Caco-2 (cell line): ENCODE measurements at regions of chr5 and their contacts with region 1.

Region 1: DNA sequence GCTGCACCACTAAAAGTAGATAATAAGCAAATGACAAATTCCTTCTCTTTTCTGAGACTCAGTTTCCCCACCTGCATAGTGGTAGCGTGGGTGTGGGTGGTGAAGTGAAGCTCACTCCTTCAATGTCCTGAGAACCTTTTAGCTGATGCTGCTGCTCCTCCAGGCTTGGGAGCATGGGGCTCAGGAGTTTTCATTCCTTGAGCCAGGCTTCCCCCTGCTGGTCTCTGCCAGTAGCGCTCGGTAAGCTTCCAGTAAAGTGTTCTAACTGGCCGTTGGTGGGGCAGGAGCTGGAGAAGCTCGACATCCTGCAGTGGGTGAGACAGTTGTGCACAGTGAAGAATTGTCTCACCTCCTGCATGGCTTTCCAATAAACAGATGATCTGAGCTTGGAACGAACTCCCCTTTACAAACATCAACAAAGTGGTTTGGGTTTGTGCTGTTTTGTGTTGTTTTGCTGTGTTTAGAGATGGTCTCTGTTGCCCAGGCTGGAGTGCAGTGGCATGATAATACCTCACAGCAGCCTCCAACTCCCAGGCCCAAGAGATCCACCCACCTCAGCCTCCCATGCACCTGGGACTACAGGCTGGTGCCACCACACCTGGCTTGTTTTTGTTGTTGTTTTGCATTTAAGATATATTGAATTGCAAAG is 34.6 kb downstream of the SPARC start:
- DNase-seq: peak; percentile 79 to 86
- H3K4me3 ChIP-seq: no peak overlapping the region
- H3K4me3 Mint-ChIP-seq: no peak overlapping the region
- H3K27ac Mint-ChIP-seq: no peak overlapping the region
- H3K4me1 ChIP-seq: no peaks in the 10 kb centered on the region
- H3K4me1 Mint-ChIP-seq: peaks cover 7% of the 10 kb centered on the region
- H3K27me3 ChIP-seq: no peaks in the 10 kb centered on the region
- H3K27me3 Mint-ChIP-seq: no peaks in the 10 kb centered on the region
- CTCF ChIP-seq: peak; percentile 88 to 98

Region 2: GRCh38 chr5:151288180-151288579 is 363.9 kb before region 1 on chr5:
- CTCF ChIA-PET with region 1: no interaction called
- POLR2A ChIA-PET with region 1: no interaction called
- intact Hi-C with region 1: loop called (anchors 1 kb)
- DNase-seq: peak; percentile 50 to 53
- H3K4me3 ChIP-seq: no peak overlapping the region
- H3K4me3 Mint-ChIP-seq: no peak overlapping the region
- H3K27ac Mint-ChIP-seq: no peak overlapping the region
- H3K4me1 ChIP-seq: peaks cover 6% of the 10 kb centered on the region
- H3K4me1 Mint-ChIP-seq: peaks cover 12% of the 10 kb centered on the region
- H3K27me3 ChIP-seq: no peaks in the 10 kb centered on the region
- H3K27me3 Mint-ChIP-seq: no peaks in the 10 kb centered on the region
- CTCF ChIP-seq: peak in 1 of 2 experiments; percentile 67

Region 3: DNA sequence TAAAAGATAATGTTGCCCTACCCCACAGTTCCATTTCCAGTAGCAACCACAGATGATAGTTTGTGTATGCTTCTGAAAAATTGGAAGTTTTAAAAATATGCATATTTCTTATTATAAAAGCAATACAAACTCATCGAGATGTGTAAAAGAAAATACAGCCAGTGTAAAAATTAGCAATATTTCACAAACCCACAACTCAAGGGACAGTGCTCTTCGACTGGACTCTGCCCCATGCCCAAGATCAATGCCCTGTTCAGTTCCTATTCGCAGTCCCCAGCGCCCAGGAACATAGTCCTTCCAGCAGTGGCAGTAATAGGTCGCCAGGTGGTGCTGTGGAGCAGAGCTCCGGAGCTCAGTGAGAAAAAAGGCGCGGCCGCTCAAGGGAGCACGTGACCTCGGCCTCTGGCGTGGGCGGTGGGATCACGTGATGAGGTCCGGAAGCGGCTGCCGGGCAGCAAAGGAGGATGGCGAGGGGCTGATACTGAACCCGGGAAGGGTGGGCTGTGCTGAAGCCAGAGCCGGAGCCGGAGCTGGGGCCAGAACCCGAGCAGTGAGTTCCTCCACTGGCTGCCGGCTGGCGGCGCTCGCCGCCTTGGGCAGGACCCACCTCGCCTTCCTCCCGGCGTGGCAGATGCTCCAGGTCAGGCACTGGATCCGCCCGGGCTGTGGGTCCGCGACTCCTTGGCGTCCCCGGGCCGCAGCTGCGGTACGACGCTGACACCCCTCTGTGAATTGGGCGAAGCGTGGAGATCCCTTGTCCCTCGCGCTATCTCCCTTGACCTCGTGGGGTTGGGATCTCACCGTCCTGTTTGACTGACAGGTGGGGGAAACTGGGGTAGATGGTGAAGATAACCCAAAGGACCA is 204.7 kb before region 1 on chr5 and contains the start of gene SLC36A1:
- CTCF ChIA-PET with region 1: interaction called, 54 read pairs
- POLR2A ChIA-PET with region 1: interaction called, 4 read pairs
- intact Hi-C with region 1: loop called (anchors 1 kb)
- DNase-seq: peak; percentile 94
- H3K4me3 ChIP-seq: peak within 1 kb of the TSS; percentile 81
- H3K4me3 Mint-ChIP-seq: peak within 1 kb of the TSS; percentile 94
- H3K27ac Mint-ChIP-seq: peak within 1 kb of the TSS; percentile 88
- H3K4me1 ChIP-seq: peaks cover 8% of the 10 kb centered on the region; the same call in 1 of the 2 replicates
- H3K4me1 Mint-ChIP-seq: peaks cover 27% of the 10 kb centered on the region
- H3K27me3 ChIP-seq: no peaks in the 10 kb centered on the region
- H3K27me3 Mint-ChIP-seq: no peaks in the 10 kb centered on the region
- CTCF ChIP-seq: peak; percentile 87 to 93
- total RNA-seq, gene SLC36A1: 17.5 and 18.2 TPM in 2 replicates

Region 4: GRCh38 chr5:151523335-151523734 is 128.8 kb before region 1 on chr5:
- CTCF ChIA-PET with region 1: interaction called, 38 read pairs
- POLR2A ChIA-PET with region 1: no interaction called
- intact Hi-C with region 1: loop called (anchors 1 kb)
- DNase-seq: peak; percentile 55 to 59
- H3K4me3 ChIP-seq: no peak overlapping the region
- H3K4me3 Mint-ChIP-seq: no peak overlapping the region
- H3K27ac Mint-ChIP-seq: no peak overlapping the region
- H3K4me1 ChIP-seq: no peaks in the 10 kb centered on the region
- H3K4me1 Mint-ChIP-seq: no peaks in the 10 kb centered on the region
- H3K27me3 ChIP-seq: no peaks in the 10 kb centered on the region
- H3K27me3 Mint-ChIP-seq: no peaks in the 10 kb centered on the region
- CTCF ChIP-seq: peak; percentile 67 to 71

Region 5: DNA sequence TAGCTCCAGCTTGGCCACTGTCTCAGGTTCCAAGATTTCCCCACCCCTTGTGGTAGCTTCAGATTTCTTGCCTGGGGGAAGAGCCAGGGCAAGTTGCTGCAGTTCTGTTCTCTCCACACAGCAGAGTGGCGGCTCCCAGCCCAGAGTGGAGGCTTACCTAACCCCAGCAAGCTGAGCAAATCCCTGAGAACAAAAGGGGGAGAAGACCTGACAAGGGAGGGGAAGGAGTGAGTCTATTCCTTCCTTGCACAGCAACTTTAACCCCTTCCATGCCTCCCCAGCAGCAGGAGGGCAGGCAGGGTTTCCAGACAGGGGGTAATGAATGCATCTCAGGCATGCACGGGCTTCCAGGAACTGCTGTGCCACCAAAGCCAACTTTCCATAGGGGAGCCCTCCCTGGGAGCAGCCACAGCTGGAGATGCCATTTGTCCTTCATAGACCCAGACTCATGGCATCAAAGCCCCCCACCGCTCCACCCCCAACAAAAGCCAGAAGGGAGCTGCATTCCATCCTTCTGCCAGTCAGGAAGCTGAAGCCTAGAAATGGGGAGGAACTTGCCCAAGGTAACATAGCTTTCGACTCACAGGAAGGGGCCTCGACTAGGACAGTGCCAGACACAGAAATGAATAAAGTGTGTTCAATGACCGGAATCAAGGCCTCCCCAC is 32.2 kb before region 1 on chr5:
- CTCF ChIA-PET with region 1: interaction called, 6 read pairs
- POLR2A ChIA-PET with region 1: no interaction called
- intact Hi-C with region 1: loop called (anchors 2 kb)
- DNase-seq: peak; percentile 27 to 67
- H3K4me3 ChIP-seq: no peak overlapping the region
- H3K4me3 Mint-ChIP-seq: no peak overlapping the region
- H3K27ac Mint-ChIP-seq: no peak overlapping the region
- H3K4me1 ChIP-seq: peaks cover 47% of the 10 kb centered on the region
- H3K4me1 Mint-ChIP-seq: peaks cover 22% of the 10 kb centered on the region
- H3K27me3 ChIP-seq: no peaks in the 10 kb centered on the region
- H3K27me3 Mint-ChIP-seq: no peaks in the 10 kb centered on the region
- CTCF ChIP-seq: no peak

Region 6: GRCh38 chr5:151771259-151772028 is 119.3 kb after region 1 on chr5 and contains the start of gene G3BP1:
- CTCF ChIA-PET with region 1: interaction called, 11 read pairs
- POLR2A ChIA-PET with region 1: no interaction called
- intact Hi-C with region 1: no loop called
- DNase-seq: peak; percentile 100
- H3K4me3 ChIP-seq: peak within 1 kb of the TSS; percentile 98
- H3K4me3 Mint-ChIP-seq: no peak within 1 kb of the TSS
- H3K27ac Mint-ChIP-seq: no peak within 1 kb of the TSS
- H3K4me1 ChIP-seq: no peaks in the 10 kb centered on the region; the same call in 1 of the 2 replicates
- H3K4me1 Mint-ChIP-seq: peaks cover 17% of the 10 kb centered on the region
- H3K27me3 ChIP-seq: no peaks in the 10 kb centered on the region
- H3K27me3 Mint-ChIP-seq: no peaks in the 10 kb centered on the region
- CTCF ChIP-seq: peak; percentile 4 to 60
- total RNA-seq, gene G3BP1: 291 and 329 TPM in 2 replicates